ENCODE measurements at regions of chr15 and their contacts with region 1.

Region 1: DNA sequence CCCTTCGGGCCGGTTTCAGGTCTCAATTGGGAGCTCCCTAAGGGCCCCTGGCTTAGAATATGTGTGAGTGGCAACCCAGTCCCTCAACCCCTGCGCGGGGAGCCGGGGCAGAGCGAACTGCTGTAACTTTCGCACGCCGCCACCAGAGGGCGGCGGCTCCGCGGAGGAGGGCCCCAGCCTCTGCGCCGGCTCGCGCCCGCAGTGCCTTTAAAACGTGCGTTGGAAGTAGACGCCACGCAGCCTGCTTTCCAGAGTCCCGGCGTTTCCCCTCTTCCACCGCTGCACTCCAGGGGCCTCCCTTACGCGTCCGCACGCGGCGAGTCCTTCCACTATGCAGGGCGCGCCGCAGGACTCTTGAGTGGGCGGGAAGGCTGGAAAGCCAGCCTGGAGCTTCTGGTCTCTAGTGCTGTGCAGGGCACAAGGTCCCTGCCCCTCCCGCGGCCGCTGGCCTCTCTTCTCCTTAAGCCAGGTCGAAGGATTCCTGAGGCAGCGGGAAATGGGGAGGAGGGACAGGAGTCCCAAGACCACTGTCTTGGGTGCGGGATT is 23.7 kb upstream of the RNU6-1 start:
- DNase-seq: peak; percentile 81
- H3K4me3 ChIP-seq: peak overlapping the region; percentile 28 to 57 (median 34)
- H3K27ac ChIP-seq: peak overlapping the region; percentile 9 to 67 (median 61)
- H3K4me1 ChIP-seq: peaks cover 3 to 12% (median 10%) of the 10 kb centered on the region in 4 donors
- H3K27me3 ChIP-seq: no peaks in the 10 kb centered on the region
- CTCF ChIP-seq: peak; percentile 90 to 98 (median 95)
- EP300 ChIP-seq: no peak
- POLR2A ChIP-seq: no peak

Region 2: GRCh38 chr15:68053701-68054627 is 190.4 kb after region 1 on chr15 and contains the start of gene PIAS1:
- in situ Hi-C with region 1: loop called in 3 of 4 experiments (anchors 25 kb)
- intact Hi-C with region 1: loop called (anchors 10 kb)
- DNase-seq: peak; percentile 95
- H3K4me3 ChIP-seq: peak within 1 kb of the TSS; percentile 88 to 98 (median 96)
- H3K27ac ChIP-seq: peak within 1 kb of the TSS; percentile 92 to 98 (median 96)
- H3K4me1 ChIP-seq: peaks cover 0 to 37% (median 32%) of the 10 kb centered on the region in 4 donors
- H3K27me3 ChIP-seq: no peaks in the 10 kb centered on the region
- CTCF ChIP-seq: peak in 2 of 5 experiments; percentile 10 to 17
- EP300 ChIP-seq: no peak
- POLR2A ChIP-seq: peak; percentile 94
- total RNA-seq, gene PIAS1: 34.0 to 141 (median 55.4) TPM

Region 3: GRCh38 chr15:68149059-68149458 is 285.5 kb after region 1 on chr15:
- in situ Hi-C with region 1: loop called (anchors 5 to 25 kb)
- intact Hi-C with region 1: loop called (anchors 2 kb)
- DNase-seq: no peak
- H3K4me3 ChIP-seq: no peak overlapping the region
- H3K27ac ChIP-seq: no peak overlapping the region
- H3K4me1 ChIP-seq: peaks cover 0 to 8% (median 0%) of the 10 kb centered on the region in 4 donors
- H3K27me3 ChIP-seq: no peaks in the 10 kb centered on the region
- CTCF ChIP-seq: no peak
- EP300 ChIP-seq: no peak
- POLR2A ChIP-seq: no peak

Region 4: DNA sequence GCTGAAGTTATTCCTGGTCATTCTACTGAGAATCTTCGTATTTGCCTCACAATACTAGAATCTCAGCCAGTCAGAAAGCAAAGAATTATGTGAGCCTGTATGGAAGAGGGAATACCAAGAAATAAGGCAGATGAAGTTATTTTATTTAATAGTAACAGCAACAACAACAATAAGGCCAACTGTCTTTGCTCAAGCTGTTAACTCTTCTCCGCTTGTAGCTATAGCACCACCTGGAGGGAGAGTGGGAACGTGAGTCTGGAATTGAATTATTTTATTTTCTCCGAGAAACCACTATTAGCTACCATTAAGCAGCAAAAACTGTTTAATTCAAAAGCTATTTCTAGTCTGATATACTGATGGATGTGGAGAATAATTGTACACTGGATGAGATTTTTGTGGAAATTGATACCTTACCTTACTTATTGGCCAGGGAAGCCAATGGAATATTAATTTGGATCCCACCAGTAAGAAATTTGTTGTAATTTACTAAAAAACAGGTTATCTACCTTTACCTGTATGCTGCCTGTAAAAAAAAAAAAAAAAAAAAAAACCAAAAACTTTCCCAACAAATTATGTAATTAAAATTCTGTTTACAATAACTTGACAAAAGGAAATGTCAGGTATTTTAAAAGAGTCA is 291.5 kb after region 1 on chr15:
- in situ Hi-C with region 1: loop called in 3 of 4 experiments (anchors 10 to 25 kb)
- intact Hi-C with region 1: loop called (anchors 2 kb)
- DNase-seq: peak; percentile 33
- H3K4me3 ChIP-seq: no peak overlapping the region
- H3K27ac ChIP-seq: no peak overlapping the region
- H3K4me1 ChIP-seq: peaks cover 0 to 8% (median 2%) of the 10 kb centered on the region in 4 donors
- H3K27me3 ChIP-seq: no peaks in the 10 kb centered on the region
- CTCF ChIP-seq: peak; percentile 68 to 82 (median 73)
- EP300 ChIP-seq: no peak
- POLR2A ChIP-seq: no peak

Region 5: GRCh38 chr15:68210821-68211655 is 347.5 kb after region 1 on chr15:
- in situ Hi-C with region 1: no loop called
- intact Hi-C with region 1: loop called (anchors 2 kb)
- DNase-seq: peak; percentile 75
- H3K4me3 ChIP-seq: peak overlapping the region in 1 of 4 donors; percentile 4
- H3K27ac ChIP-seq: peak overlapping the region in 2 of 4 donors; percentile 8 to 24
- H3K4me1 ChIP-seq: peaks cover 5 to 19% (median 14%) of the 10 kb centered on the region in 4 donors
- H3K27me3 ChIP-seq: no peaks in the 10 kb centered on the region
- CTCF ChIP-seq: peak; percentile 91 to 93 (median 92)
- EP300 ChIP-seq: no peak
- POLR2A ChIP-seq: no peak